ENCODE measurements at regions of chr3 and their contacts with region 1.

Region 1: DNA sequence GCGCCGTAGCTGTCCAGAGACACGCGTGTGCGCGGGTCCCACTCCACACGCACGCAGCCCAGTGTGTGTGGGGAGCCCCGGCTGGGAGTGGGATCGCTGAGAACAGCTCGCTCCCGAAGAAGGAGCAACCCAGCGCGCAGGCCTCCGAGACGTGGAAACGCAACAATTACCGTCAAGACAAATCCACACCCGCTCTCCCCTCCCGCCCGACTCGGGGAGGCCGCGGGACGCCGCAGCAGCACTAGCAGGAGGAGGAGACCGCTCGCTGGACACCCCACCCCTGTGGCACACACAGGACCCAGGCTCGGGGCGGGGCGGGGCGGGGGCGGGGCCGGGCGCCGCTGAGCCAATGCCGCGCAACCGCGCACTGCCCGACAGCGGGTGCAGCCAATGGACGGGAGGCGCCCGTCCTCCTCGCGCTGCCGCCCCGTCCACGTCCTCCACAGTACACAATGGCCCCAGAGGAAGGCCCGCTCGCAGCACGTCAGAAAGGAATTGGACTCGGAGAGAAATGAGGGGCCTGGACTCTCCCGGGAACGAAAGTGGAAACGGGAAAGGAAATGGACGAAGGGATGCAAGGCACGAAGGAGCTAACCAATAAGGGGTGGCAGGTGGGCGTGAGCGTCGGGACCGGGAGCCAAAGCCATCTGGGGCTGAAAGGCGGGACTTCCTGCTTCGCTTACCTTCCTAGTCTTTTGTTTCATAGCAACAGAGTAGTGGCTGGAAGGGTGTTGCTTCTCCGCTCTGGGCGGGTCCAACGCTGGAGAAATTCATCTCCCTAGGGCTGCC is at the start of gene CBLB:
- DNase-seq: peak; percentile 92
- H3K4me3 ChIP-seq: peak within 1 kb of the TSS; percentile 84 to 89
- H3K27ac ChIP-seq: peak within 1 kb of the TSS; percentile 92 to 98
- H3K4me1 ChIP-seq: no peaks in the 10 kb centered on the region
- H3K27me3 ChIP-seq: no peaks in the 10 kb centered on the region
- CTCF ChIP-seq: no peak
- POLR2A ChIP-seq: peak; percentile 84
- total RNA-seq, gene CBLB: 28.2 to 62.8 TPM

Region 2: DNA sequence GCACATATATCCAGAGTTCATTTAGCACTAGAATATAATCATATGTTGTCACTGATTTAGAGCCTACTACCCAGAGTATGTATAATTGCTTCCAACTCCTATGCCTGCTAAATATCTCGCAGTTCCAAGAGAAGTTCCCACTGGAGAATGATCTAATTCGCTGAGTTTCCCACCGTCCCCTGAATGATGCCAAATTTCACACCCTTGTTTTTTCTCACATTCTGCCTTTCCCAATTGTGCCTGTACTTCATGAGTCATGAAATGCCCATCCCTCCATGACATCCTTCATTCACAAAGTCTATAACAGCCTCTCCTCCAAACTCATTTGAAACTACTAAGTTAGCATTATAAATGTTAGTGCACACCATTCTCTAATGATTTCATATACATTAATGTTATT is 177.3 kb before region 1 on chr3:
- intact Hi-C with region 1: loop called (anchors 10 kb)
- DNase-seq: no peak
- H3K4me3 ChIP-seq: no peak overlapping the region
- H3K27ac ChIP-seq: no peak overlapping the region
- H3K4me1 ChIP-seq: no peaks in the 10 kb centered on the region
- H3K27me3 ChIP-seq: no peaks in the 10 kb centered on the region
- CTCF ChIP-seq: no peak
- POLR2A ChIP-seq: no peak

Region 3: DNA sequence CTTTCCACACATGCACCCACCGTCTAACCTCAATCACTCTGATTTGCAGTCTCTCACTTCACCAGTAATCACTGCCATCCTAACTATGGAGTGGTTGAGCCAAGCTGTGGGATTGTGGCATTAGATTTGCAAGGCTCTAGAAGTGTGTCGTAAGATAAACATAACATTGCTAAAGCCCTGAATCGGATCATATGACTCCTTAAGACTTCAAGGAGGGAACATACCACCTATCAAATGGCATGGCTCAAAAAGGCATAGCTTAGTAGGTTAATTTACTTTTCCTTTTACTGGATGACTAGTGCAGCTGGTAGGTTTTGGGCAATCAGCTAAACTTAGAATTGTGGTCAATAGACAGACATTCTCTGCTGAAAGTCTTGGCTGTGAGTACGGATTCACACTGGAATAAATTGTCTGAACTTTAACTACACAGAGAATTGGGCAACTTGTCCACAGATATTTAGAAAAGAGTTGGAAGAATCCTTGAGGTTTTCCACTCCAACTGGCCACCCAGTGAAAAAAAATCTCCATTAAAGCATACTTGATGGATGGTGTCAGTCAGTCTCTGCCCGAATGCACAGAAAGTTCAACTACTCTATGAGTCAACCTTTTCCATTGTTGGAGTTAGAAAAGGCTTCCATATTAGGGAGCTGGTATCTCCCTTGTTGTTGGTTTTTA is 476.6 kb after region 1 on chr3:
- intact Hi-C with region 1: loop called (anchors 10 kb)
- DNase-seq: peak; percentile 17
- H3K4me3 ChIP-seq: no peak overlapping the region
- H3K27ac ChIP-seq: no peak overlapping the region
- H3K4me1 ChIP-seq: no peaks in the 10 kb centered on the region
- H3K27me3 ChIP-seq: no peaks in the 10 kb centered on the region
- CTCF ChIP-seq: no peak
- POLR2A ChIP-seq: no peak

Measured in prostate gland (tissue), 2 donors.